Activated CD8-positive, alpha-beta T cell treated with anti-CD3 and anti-CD28 coated beads for 36 hours (primary cell): ENCODE measurements at regions of chr2 and their contacts with region 1.

Region 1: DNA sequence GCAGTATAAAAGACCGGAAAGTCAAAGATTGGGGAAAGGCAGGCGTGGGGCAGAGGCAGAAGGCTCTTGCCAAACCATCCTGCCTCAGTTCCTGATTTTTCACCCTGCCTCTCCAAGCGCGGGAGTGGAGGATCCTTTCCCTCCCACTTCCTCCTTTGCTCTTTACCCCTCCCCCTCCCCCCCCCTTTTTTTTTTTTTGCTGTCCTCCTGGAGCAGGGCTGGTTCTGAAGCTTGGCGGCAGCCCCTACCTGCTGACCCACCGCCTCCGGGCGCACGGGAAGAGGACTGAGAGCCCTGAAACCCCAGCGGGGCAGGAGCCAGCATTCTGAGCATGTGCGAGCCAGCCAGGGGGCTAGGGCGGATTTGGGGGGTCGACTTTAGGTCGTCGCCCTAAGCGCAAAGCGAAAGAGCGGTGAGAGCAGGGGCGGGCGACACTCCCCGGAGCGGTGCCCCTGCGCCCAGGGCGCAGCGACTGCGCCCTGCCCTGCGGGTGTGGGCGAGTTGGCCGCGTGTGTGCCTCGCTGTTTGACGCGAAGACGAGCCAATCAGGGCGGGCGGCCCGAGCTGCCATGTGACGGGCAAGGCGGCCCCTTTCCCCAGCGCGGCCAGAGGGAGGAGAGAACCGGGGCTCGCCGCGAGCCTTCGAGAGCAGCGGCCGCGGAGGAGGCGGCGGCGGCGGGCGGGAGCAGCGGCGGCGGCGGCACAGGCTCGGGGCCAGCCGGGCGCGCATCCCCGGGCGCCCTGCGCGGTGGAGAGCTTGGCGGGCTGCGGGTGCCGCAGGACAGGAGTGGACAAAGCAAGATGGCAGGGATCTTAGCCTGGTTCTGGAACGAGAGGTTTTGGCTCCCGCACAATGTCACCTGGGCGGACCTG is at the start of gene CERS6:
- DNase-seq: peak; percentile 95
- ATAC-seq: peak; percentile 92
- H3K4me3 Mint-ChIP-seq: no peak within 1 kb of the TSS
- H3K27ac Mint-ChIP-seq: peak within 1 kb of the TSS; percentile 72
- H3K4me1 Mint-ChIP-seq: peaks cover 32% of the 10 kb centered on the region
- H3K27me3 Mint-ChIP-seq: no peaks in the 10 kb centered on the region
- CTCF ChIP-seq: no peak
- total RNA-seq, gene CERS6: 15.4 to 16.1 TPM

Region 2: DNA sequence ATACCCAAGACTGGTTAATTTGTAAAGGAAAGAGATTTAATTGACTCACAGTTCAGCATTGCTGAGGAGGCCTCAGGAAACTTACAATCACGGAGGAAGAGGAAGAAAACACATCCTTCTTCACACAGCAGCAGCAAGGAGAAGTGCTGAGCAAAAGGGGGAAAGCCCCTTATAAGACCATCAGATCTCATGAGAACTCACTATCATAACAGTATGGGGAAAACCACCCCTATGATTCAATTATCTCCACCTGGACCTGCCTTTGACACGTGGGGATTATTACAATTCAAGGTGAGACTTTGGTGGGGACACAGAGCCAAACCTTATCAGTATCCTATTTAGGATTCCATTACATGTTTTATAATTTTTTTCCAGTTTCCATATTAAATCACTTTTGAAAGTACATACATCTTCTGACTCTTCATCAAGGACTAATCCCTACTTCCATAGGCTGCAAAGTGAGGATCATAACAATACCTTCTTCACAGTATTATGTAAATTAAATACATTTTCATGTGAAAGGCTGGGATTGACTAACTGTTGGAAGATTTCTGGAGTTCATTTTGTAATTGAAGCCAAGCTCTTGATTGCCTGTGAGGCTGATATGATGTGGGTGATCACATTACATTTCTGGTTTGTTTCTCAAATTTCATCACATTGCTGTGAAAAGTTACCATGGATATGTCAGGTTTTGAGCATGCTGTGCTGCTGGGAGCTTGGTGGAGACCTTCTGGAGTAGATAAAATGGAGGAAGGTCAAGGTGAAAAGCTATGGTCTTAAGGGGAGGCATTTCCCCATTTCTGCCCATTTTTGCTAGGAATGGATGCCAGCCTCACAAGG is 31.6 kb before region 1 on chr2:
- CTCF ChIA-PET with region 1: no interaction called
- POLR2A ChIA-PET with region 1: no interaction called
- intact Hi-C with region 1: no loop called
- DNase-seq: no peak
- ATAC-seq: peak; percentile 47
- H3K4me3 Mint-ChIP-seq: no peak overlapping the region
- H3K27ac Mint-ChIP-seq: no peak overlapping the region
- H3K4me1 Mint-ChIP-seq: peaks cover 18% of the 10 kb centered on the region
- H3K27me3 Mint-ChIP-seq: no peaks in the 10 kb centered on the region
- CTCF ChIP-seq: no peak

Region 3: GRCh38 chr2:168490015-168490874 is 34.4 kb after region 1 on chr2:
- CTCF ChIA-PET with region 1: no interaction called
- POLR2A ChIA-PET with region 1: interaction called, 6 read pairs
- intact Hi-C with region 1: loop called (anchors 5 kb)
- DNase-seq: peak; percentile 81
- ATAC-seq: peak; percentile 90
- H3K4me3 Mint-ChIP-seq: peak overlapping the region; percentile 66
- H3K27ac Mint-ChIP-seq: peak overlapping the region; percentile 81
- H3K4me1 Mint-ChIP-seq: peaks cover 56% of the 10 kb centered on the region
- H3K27me3 Mint-ChIP-seq: no peaks in the 10 kb centered on the region
- CTCF ChIP-seq: no peak